Left colon (tissue), 2 donors: ENCODE measurements at regions of chr18 and their contacts with region 1.

Region 1: DNA sequence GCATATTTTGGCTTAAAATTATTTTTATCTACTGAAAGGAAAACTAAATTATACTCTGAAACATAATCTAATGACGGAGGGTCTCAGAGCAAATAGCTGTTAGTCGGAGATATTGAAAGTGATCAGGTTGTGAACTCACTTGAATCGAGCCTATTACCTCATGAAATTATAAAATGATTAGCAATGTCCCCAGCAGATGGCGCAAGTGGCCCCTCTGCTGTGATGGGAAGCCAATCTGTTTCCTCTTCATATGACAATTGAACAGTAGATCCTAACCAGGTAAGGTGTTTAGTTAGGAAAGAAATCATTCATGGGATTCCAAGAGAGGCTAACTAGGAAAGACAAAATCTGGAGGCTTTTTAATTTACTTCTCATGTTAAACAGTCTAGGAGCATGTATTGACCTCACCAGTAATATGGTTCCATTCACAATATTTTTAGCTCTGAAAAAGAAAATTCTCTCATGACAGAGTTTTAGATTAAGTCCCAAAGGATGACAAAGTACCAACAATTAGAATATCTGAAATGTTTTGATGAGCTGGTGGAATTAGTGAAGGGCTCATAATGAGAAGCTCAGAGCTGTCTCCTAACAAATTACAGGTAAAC is 29.9 kb upstream of the MPPE1 start:
- DNase-seq: peak; percentile 53 to 90
- ATAC-seq: peak; percentile 85

Region 2: DNA sequence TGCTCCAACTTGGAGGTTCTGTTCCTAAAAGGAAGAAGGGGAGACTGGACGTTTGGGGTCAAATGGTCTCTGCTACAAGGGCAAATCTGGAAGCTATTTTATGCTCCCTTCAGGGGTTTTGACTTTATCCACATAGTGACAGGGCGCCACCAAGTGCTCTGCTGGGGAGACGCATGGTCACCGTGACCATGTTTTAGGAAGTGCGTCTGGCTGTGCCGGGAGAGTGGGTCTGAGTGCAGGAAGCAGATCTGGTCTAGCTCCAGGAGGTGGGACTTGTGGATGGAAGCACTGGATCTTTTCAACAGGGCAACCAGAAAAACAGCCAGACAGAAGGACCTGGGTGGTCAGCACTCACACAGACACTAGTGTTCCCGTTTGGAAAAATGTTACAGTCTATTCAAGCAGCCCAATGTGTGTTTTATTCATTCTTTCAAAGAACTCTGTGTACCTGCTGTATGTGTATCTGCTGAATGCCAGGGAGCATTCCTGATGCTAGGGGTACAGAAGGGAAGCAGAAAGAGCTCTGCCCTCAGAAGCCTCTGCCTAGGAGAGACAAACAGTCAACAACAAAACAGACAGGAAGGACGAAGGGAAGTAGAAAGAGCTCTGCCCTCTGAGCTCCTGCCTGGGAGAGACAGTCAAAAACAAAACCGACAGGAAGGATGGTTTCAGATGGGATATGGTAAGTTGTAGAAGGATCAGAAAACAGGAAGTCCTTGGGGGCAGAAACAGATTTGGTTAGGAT is 57.6 kb after region 1 on chr18:
- intact Hi-C with region 1: loop called (anchors 2 to 10 kb)
- DNase-seq: peak; percentile 82 to 83
- ATAC-seq: peak; percentile 70

Region 3: GRCh38 chr18:12038639-12039417 is 100.9 kb after region 1 on chr18:
- intact Hi-C with region 1: loop called in 1 of 2 experiments (anchors 5 kb)
- DNase-seq: peak; percentile 76 to 83
- ATAC-seq: peak; percentile 88

Region 4: GRCh38 chr18:12121175-12122042 is 183.4 kb after region 1 on chr18:
- intact Hi-C with region 1: no loop called
- DNase-seq: no peak
- ATAC-seq: no peak